CD8-positive, alpha-beta T cell (primary cell): ENCODE measurements at regions of chr16 and their contacts with region 1.

Region 1: DNA sequence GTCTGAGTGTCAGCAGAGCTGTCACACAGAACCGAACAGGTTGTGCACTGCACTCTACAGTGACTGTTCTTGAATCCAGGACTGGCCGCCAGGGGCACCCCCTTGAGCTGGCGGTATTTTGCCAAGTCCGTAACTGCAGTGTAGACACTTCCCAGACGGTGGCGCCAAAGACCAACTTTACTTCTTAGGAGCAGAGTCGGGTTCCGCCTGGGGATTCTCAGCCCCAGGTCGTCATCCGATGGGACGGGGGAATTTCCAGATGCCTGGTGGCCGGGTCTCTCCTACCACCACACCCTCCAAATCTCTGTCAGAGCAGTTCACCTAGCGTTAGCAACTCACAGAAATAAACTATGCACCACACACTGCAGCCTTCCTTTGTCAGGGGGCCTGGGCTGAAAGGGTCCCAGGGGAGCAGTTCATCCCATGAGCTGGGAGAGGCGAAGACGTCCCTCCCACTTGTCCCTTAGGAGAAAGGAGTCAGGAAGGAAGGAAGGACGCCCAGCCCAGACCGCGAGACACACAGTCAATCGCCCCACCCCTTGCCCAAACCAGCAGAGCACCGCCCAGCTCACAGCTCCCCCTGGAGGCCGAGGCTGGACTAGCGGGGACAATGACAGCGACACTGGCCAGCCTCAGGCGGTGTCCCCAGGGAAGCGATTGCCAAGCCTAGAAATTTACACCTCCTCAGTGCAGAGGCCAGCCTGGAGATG is 7.4 kb upstream of the RIPOR1 start:
- DNase-seq: peak; percentile 92 to 98 (median 96)
- ATAC-seq: peak; percentile 91
- H3K4me3 ChIP-seq: peak overlapping the region; percentile 58 to 80
- H3K4me3 Mint-ChIP-seq: peak overlapping the region; percentile 92
- H3K27ac ChIP-seq: peak overlapping the region; percentile 65 to 95
- H3K27ac Mint-ChIP-seq: peak overlapping the region; percentile 96
- H3K4me1 ChIP-seq: peaks cover 15% of the 10 kb centered on the region
- H3K4me1 Mint-ChIP-seq: peaks cover 34% of the 10 kb centered on the region
- H3K27me3 ChIP-seq: no peaks in the 10 kb centered on the region
- H3K27me3 Mint-ChIP-seq: no peaks in the 10 kb centered on the region
- CTCF ChIP-seq: peak; percentile 89

Region 2: GRCh38 chr16:67480833-67481560 is 40.3 kb before region 1 on chr16 and contains the start of gene ATP6V0D1:
- CTCF ChIA-PET with region 1: interaction called, 111 read pairs
- POLR2A ChIA-PET with region 1: interaction called, 11 read pairs
- intact Hi-C with region 1: loop called (anchors 1 kb)
- DNase-seq: peak; percentile 98 to 99 (median 99)
- ATAC-seq: peak; percentile 90
- H3K4me3 ChIP-seq: peak within 1 kb of the TSS; percentile 91 to 100
- H3K4me3 Mint-ChIP-seq: peak within 1 kb of the TSS; percentile 99
- H3K27ac ChIP-seq: peak within 1 kb of the TSS; percentile 96 to 100
- H3K27ac Mint-ChIP-seq: peak within 1 kb of the TSS; percentile 99
- H3K4me1 ChIP-seq: peaks cover 30% of the 10 kb centered on the region
- H3K4me1 Mint-ChIP-seq: peaks cover 49% of the 10 kb centered on the region
- H3K27me3 ChIP-seq: no peaks in the 10 kb centered on the region
- H3K27me3 Mint-ChIP-seq: no peaks in the 10 kb centered on the region
- CTCF ChIP-seq: peak; percentile 87
- total RNA-seq, gene ATP6V0D1: 56.3 to 62.0 TPM

Region 3: DNA sequence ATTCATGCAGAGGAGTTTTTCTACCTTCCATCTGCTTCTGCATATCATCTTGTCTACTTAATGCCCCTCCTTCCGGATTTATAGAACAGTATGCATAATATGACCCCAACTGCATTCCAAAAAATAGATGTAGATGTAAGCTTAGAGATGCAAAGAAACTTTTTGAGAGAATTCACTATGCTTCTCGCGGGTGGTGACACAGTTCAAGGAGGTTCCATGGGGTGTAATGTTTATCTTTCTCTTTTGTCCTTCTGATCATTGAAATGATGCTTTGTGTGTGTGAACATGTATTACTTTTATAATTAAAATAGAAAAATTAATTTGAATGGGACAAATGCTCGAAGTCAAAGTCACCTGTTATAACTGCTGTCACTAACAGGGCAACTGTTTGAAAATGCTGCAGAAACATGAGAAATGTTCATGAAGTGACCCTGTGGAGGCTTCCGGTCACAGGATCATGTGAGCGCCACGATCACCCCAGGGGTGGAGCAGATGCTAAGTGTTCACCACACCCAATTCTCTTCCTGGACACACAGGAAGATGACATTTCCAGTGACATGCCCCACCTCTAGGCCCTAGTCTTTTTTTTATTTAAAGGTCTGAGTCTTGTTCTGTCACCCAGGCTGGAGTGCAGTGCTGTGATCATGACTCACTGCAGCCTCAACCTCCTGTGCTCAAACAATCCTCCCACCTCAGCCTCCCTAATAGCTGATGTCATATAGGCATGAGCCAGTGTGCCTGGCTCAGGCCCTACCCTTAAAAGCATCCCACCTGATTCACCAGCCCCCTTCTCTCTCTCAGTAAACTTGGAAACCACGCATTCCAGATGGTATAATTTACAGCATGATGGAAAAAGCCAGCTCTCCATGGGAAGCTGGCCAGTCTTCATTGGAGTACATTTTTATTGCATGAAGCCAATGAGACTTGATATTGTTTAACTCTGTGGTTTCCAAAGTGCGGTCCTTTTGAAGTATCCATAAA is 16.9 kb before region 1 on chr16:
- CTCF ChIA-PET with region 1: interaction called, 355 read pairs
- POLR2A ChIA-PET with region 1: interaction called, 4 read pairs
- intact Hi-C with region 1: no loop called
- DNase-seq: peak in 8 of 9 experiments; percentile 23 to 80 (median 54)
- ATAC-seq: peak; percentile 84
- H3K4me3 ChIP-seq: no peak overlapping the region
- H3K4me3 Mint-ChIP-seq: peak overlapping the region; percentile 31
- H3K27ac ChIP-seq: peak overlapping the region; percentile 42 to 84
- H3K27ac Mint-ChIP-seq: peak overlapping the region; percentile 91
- H3K4me1 ChIP-seq: peaks cover 57% of the 10 kb centered on the region
- H3K4me1 Mint-ChIP-seq: peaks cover 47% of the 10 kb centered on the region
- H3K27me3 ChIP-seq: no peaks in the 10 kb centered on the region
- H3K27me3 Mint-ChIP-seq: no peaks in the 10 kb centered on the region
- CTCF ChIP-seq: no peak

Region 4: DNA sequence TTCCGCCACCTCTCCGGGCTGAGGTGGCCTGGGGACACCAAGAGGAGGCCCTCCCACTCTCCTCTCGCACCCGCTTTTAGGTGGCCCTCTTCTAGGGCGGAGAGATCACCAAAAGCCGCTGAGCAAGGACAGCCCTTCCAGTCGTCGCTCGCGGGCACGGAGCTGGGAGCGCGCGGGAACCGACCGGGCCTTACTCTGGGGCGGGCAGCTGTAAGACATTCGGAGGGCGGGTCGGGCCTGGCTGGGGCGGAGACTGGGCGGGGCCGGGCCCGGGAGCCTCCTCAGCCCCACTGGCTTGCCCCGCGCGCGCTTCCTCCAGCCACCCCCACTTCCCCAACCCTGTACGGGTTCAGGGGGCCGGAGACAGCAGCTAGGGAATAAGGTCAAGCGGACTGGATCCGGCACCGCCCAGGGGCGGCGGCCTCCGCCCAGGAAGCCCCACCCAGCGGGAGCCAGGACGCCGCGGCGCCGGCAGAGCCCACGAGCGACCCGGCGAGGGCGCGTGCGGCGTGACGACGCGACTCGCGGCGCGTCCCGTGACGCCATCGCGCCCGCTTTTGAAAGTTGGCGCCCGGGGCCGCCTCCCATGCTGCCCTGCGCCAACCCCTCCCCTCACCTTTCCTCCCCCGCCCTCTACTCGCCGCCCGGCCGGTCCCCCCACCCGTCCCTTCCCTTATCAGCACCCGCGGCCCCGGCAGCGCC is 40.7 kb after region 1 on chr16:
- CTCF ChIA-PET with region 1: interaction called, 36 read pairs
- POLR2A ChIA-PET with region 1: interaction called, 10 read pairs
- intact Hi-C with region 1: loop called (anchors 1 kb)
- DNase-seq: peak; percentile 93 to 99 (median 96)
- ATAC-seq: peak; percentile 77
- H3K4me3 ChIP-seq: peak overlapping the region; percentile 65 to 73
- H3K4me3 Mint-ChIP-seq: peak overlapping the region; percentile 82
- H3K27ac ChIP-seq: peak overlapping the region; percentile 71 to 90
- H3K27ac Mint-ChIP-seq: peak overlapping the region; percentile 96
- H3K4me1 ChIP-seq: peaks cover 35% of the 10 kb centered on the region
- H3K4me1 Mint-ChIP-seq: peaks cover 53% of the 10 kb centered on the region
- H3K27me3 ChIP-seq: no peaks in the 10 kb centered on the region
- H3K27me3 Mint-ChIP-seq: no peaks in the 10 kb centered on the region
- CTCF ChIP-seq: no peak

Region 5: DNA sequence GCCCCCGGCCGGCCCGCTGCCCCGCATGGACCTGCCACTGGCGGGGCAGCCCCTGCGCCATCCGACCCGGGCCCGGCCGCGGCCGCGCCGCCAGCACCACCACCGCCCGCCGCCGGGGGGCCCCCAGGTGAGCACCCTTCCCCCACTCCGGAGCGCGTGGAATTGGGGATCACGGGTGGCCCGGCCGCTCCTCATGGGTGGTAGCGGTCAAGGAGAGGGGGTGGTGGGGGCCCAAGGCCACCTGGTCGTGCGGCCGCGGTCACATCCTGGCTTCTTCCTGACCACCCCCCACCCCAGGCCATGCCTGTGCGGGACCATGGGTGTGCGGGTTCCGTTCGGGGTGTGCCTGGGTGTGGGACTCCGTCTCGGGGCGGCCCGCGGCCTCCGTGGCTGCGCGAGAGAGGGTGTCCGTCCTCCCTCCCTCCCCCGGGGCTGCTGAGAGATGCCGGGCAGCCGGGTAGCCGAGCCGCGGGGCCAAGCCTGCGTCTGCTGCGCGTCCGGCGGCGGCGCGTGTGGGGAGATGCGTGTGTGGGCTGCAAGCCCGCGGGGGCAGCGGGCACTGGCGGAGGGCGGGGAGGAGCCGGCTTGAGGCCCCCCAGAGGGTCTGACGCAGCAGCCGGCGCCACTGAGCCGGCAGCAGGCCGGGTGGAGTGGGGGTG is 132.0 kb after region 1 on chr16:
- CTCF ChIA-PET with region 1: interaction called, 158 read pairs
- POLR2A ChIA-PET with region 1: no interaction called
- intact Hi-C with region 1: no loop called
- DNase-seq: peak in 1 of 9 experiments; percentile 12
- ATAC-seq: no peak
- H3K4me3 ChIP-seq: no peak overlapping the region
- H3K4me3 Mint-ChIP-seq: no peak overlapping the region
- H3K27ac ChIP-seq: no peak overlapping the region
- H3K27ac Mint-ChIP-seq: no peak overlapping the region
- H3K4me1 ChIP-seq: no peaks in the 10 kb centered on the region
- H3K4me1 Mint-ChIP-seq: peaks cover 14% of the 10 kb centered on the region
- H3K27me3 ChIP-seq: no peaks in the 10 kb centered on the region
- H3K27me3 Mint-ChIP-seq: no peaks in the 10 kb centered on the region
- CTCF ChIP-seq: no peak

Region 6: DNA sequence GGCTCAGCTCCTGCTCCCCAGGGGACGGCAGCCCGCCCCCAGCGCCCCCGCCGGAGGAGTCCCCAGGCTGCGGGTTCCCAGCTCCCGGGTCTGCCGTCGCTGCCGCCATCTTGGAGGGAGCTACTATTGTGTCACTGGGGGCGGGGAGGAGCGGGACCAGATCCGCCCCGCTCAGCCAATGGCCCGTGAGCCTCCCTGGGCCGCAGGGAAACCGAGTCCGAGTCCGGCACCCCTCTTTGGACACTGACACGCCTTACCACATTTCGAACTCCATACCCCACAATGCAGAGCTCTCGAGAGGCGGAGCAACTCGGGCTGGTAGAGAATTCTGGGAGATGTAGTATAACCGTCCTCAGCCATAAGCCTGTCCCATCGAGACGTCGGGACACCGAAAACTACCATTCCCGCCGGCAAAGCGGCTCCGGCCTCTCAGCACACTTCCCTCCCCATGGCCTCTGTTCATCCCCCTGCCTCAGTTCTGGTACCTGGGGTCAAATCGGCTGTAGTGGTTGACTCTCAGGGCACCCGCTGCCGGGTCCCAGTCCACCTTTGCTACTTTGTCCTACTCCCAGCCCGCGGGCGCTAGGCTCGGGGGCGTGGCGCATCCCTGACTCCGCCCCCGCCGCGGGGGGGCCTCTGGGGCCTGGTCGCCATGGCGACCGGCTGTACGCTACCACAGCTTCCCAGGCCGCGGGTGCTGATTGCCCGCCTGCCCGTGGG is 285.3 kb after region 1 on chr16 and contains the starts of genes RANBP10 and TSNAXIP1:
- CTCF ChIA-PET with region 1: interaction called, 4 read pairs
- POLR2A ChIA-PET with region 1: no interaction called
- intact Hi-C with region 1: loop called in 1 of 2 experiments (anchors 1 kb)
- DNase-seq: peak; percentile 92 to 99 (median 94)
- ATAC-seq: peak; percentile 91
- H3K4me3 ChIP-seq: peak within 1 kb of the TSS; percentile 89 to 96
- H3K4me3 Mint-ChIP-seq: peak within 1 kb of the TSS; percentile 95
- H3K27ac ChIP-seq: peak within 1 kb of the TSS; percentile 77 to 85
- H3K27ac Mint-ChIP-seq: peak within 1 kb of the TSS; percentile 91
- H3K4me1 ChIP-seq: peaks cover 35% of the 10 kb centered on the region
- H3K4me1 Mint-ChIP-seq: peaks cover 44% of the 10 kb centered on the region
- H3K27me3 ChIP-seq: no peaks in the 10 kb centered on the region
- H3K27me3 Mint-ChIP-seq: no peaks in the 10 kb centered on the region
- CTCF ChIP-seq: no peak
- total RNA-seq, gene RANBP10: 14.6 to 14.8 TPM
- total RNA-seq, gene TSNAXIP1: 0.31 to 0.41 TPM

Region 7: DNA sequence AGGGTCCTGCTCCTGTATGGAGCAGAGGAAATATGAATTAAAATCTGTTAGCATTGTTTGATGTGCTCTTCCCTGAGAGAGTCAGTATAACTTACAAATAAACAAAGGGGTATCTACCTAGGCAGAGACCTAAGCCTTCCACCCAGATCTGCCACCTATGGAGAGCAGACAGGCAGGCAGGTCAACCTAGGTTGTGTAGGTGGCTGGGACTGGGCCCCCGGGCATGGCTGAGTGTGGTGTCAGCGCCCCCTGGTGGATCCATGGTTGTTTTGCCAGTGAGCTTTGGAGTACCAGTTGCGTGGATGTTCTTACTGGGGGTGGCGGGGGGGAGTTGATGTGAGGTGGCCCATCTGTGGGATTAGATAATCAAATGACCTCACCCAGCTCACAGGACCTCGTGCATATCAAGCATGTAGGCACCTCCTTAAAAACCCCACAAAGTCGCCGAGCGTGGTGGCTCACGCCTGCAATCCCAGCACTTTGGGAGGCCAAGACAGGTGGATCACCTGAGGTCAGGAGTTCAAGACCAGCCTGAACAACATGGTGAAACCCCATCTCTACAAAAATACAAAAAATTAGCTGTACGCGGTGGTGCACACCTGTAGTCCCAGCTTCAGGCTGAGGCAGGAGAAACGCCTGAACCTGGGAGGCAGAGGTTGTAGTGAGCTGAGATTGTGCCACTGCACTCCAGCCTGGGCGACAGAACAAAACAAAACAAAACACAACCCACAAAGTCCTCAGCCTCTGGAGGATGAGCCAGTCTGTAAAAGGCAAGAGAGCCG is 519.4 kb after region 1 on chr16:
- CTCF ChIA-PET with region 1: interaction called, 4 read pairs
- POLR2A ChIA-PET with region 1: no interaction called
- intact Hi-C with region 1: loop called in 1 of 2 experiments (anchors 1 kb)
- DNase-seq: peak; percentile 84 to 98 (median 90)
- ATAC-seq: peak; percentile 99
- H3K4me3 ChIP-seq: no peak overlapping the region
- H3K4me3 Mint-ChIP-seq: no peak overlapping the region
- H3K27ac ChIP-seq: peak overlapping the region in 1 of 2 experiments; percentile 7
- H3K27ac Mint-ChIP-seq: peak overlapping the region; percentile 45
- H3K4me1 ChIP-seq: peaks cover 6% of the 10 kb centered on the region
- H3K4me1 Mint-ChIP-seq: peaks cover 11% of the 10 kb centered on the region
- H3K27me3 ChIP-seq: no peaks in the 10 kb centered on the region
- H3K27me3 Mint-ChIP-seq: no peaks in the 10 kb centered on the region
- CTCF ChIP-seq: peak; percentile 88